ENCODE measurements at regions of chr16 and their contacts with region 1.

Region 1: DNA sequence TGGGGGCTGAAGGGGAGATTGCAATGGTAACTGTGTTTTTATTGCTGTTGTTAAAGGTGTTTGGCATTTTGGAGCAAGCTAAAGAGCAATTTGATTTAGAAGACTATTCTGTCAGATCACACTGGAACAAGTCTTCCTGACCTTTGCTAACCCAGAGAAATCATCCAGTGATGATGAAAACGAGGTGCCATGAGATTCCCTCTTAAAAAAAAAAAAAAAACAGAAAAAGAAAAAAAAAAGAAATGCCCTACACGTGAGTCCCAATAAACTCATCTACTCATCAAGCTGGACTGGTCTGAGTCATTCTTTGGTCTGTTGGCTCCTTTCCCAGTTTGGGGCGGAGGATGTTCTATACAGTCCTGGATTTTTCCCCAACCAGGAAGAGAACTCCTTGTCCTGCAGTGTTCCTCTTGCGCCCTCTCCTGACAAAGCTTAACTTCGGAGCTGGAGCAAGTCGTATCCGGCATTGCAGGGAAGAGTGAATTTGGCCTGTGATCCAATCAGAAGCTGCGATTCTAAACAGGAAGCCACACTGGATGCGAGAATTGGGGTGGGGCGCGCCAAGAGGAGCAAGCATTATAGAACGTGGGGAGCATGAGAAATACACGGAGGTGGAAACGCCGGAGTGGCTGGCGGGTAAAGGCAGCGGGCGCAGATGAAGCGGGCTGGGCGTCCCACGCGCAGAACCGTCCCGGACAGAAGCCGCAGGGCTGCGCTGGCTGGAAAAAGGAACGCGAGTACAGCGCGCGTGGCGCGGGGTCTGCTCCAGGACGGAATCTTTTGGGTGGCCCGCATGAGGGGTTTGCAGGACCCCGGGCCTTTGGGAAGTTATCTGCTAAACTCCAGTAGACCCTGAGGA is 22.4 kb upstream of the CRYM start:
- DNase-seq: peak; percentile 95
- ATAC-seq: peak; percentile 98

Region 2: DNA sequence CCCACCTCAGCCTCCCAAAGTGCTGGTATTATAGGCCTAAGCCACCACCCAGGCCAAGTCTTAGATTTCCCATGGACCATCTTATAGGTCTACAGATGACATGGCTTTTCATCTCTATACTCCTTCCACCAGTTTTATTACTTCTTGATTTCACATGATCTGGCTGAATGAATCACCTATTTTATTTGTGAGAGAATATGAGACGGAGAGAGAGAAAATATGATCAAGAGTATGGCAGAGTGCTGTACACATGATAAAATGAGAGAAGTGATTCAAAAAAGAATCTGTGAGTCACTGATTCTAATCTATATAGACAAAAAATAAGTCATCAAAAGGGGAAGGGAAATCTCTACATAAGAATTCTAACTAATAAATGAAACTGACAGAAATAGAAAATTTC is 616.7 kb before region 1 on chr16:
- intact Hi-C with region 1: no loop called
- DNase-seq: no peak
- ATAC-seq: no peak

Region 3: DNA sequence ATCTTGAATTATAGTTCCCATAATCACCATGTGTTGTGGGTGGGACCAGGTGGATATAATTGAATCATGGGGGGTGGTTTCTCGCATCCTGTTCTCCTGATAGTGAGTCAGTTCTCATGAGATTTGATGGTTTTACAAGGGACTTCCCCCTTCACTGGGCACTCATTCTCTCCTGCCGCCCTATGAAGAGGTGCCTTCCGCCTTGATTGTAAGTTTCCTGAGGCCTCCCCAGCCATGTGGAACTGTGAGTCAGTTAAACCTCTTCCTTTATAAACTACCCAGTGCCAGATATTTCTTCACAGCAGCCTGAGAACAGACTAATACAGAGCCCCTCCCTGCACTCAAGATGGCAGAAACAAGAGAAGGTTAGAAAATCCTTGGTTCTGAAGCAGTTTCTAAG is 115.7 kb before region 1 on chr16:
- intact Hi-C with region 1: loop called (anchors 10 kb)
- DNase-seq: no peak
- ATAC-seq: no peak

Region 4: GRCh38 chr16:21937336-21937829 is 636.8 kb after region 1 on chr16:
- intact Hi-C with region 1: no loop called
- DNase-seq: no peak
- ATAC-seq: no peak

Region 5: DNA sequence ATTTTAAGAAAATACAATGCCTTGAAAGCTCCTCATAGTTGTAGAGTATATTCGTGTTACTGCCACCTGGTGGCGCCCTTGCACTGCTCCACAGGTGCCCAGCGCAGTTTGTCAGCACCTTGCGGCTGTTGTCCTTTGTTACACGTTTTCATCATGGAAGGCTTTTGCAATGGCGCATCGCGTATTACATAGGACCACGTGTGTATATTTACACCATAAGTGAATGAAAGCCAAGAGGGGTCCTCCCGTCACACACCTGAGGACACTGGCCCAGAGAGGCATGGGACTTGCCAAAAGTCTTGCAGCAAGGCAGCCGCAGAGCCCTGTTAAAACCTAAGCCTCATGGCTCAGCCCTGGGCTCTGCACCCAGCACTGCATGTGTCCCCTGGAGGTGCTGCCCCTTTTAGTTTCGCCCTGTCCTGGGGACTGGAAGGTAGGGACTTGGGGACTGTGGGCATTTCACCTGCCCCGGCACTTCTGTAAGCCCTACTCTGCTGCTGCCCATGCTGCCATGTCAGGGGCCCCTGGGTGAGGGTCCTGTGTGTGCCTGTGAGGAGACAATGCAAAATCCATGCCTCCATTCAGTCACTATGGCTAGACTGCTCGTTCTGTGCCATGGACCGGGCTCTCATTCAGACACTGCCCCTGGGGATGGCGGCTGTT is 1020.9 kb after region 1 on chr16:
- intact Hi-C with region 1: loop called (anchors 5 kb)
- DNase-seq: peak; percentile 80
- ATAC-seq: peak; percentile 77

Measured in sciatic nerve (tissue), 2 donors.